Activated CD8-positive, alpha-beta T cell treated with anti-CD3 and anti-CD28 coated beads, Interleukin-2, amount 10 ng/mL, durations not matched to agents 7 days and 5 days (primary cell): ENCODE measurements at regions of chr22 and their contacts with region 1.

Region 1: GRCh38 chr22:19730655-19731360 is 7.5 kb downstream of the GP1BB start:
- DNase-seq: peak; percentile 89
- ATAC-seq: peak; percentile 93
- H3K4me3 Mint-ChIP-seq: peak overlapping the region; percentile 58
- H3K27ac Mint-ChIP-seq: no peak overlapping the region
- H3K4me1 Mint-ChIP-seq: peaks cover 2% of the 10 kb centered on the region
- H3K27me3 Mint-ChIP-seq: no peaks in the 10 kb centered on the region

Region 2: DNA sequence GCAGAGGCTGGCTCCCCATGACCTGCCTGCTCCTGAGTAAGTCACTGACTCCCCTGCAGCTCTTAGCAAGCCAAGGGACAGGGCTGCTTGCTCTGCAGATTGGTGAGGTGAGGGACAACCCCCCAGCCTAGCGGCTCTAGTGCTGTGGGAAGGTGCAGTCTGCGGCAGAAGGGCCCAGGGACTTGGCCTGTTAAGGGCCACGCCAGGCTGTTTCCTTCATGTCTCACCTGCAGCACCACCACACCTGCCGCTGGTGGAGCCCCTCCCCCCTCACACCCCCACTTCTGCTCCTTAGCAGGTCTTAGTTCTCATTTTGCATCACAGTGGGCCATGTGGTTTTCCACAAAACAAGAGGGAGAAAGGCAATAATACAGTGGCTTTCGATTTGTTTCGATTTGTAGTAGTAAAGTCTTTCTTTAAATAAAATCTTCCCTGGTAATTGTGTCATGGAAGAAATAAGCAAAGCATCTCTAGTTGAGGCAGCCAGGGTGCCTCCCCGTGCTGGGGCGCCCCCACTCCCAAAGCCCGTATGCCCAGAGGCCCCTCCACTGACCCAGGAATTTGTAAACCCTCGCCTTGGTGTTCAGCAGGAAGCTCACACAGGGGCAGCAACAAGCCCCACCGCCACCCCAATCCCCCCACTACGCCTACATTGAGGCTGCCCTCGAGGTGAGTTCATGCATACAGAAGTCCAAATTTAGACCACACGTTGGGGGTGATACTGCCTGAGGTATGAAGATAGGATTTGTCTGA is 120.1 kb before region 1 on chr22:
- CTCF ChIA-PET with region 1: no interaction called
- POLR2A ChIA-PET with region 1: no interaction called
- DNase-seq: peak; percentile 40
- ATAC-seq: peak; percentile 55
- H3K4me3 Mint-ChIP-seq: peak overlapping the region; percentile 22
- H3K27ac Mint-ChIP-seq: peak overlapping the region; percentile 63
- H3K4me1 Mint-ChIP-seq: peaks cover 34% of the 10 kb centered on the region
- H3K27me3 Mint-ChIP-seq: no peaks in the 10 kb centered on the region

Region 3: DNA sequence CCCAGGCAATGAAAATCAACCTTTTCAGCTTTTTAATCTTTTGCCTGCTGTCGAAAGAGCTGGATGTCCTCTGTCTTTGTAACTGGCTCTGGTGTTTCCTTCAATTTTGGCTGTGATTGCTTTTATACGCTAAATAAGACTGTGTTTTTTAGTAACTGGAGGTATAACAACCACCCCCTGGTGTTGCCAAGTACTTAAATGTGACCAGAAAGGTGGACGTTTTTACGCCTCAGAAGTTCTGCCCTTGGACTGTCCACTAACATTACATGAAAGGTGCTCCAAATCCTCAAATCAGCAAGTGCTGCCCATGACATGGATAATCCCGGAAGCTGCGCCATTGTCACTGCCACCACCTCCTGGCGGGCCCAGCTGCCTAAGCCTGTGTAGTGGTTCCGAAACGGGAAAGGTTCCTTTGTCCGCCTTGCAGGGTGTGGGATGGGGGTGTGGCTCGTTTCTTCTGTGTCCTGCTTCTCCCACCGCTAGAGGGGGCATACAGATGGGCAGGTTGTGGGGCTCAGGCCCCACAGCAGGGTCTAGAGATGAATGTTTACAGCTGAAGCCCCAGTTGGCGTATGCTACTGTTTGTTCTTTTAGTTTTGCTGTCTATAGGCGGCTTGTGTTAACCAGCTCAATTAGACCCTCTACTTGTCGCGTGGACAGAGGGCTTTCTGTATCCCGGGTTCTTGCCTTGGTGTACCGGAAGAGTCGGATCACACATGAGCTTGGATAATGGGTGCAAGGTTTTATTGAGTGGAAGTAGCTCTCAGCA is 98.7 kb before region 1 on chr22:
- CTCF ChIA-PET with region 1: no interaction called
- POLR2A ChIA-PET with region 1: no interaction called
- DNase-seq: peak; percentile 35
- ATAC-seq: no peak
- H3K4me3 Mint-ChIP-seq: no peak overlapping the region
- H3K27ac Mint-ChIP-seq: no peak overlapping the region
- H3K4me1 Mint-ChIP-seq: no peaks in the 10 kb centered on the region
- H3K27me3 Mint-ChIP-seq: peaks cover 1% of the 10 kb centered on the region

Region 4: DNA sequence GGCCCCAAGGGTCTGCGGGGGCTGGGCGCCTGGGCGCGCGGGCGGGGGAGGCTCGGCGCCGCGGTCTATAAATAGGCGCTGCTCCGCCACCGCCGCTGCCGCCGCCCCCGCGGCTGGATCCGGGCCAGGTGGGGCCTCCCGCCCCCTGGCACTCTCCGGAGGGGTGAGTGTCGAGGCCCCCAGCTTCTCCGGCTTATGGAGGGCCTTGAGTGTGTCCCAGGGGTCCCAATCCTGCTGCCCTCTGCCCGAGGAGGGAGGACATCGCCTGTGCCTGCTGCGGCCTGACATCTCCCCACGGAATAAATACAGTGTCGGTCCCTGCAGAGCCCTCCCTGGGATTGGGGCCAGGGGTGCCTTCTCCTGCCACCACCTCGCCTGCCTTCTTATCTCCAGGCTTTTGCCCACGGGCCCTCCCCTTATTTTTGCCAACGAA is 11.7 kb before region 1 on chr22:
- CTCF ChIA-PET with region 1: interaction called, 10 read pairs
- POLR2A ChIA-PET with region 1: no interaction called
- DNase-seq: no peak
- ATAC-seq: no peak
- H3K4me3 Mint-ChIP-seq: peak overlapping the region; percentile 42
- H3K27ac Mint-ChIP-seq: no peak overlapping the region
- H3K4me1 Mint-ChIP-seq: peaks cover 10% of the 10 kb centered on the region
- H3K27me3 Mint-ChIP-seq: peaks cover 33% of the 10 kb centered on the region

Region 5: GRCh38 chr22:19756288-19757128 is 25.7 kb after region 1 on chr22:
- CTCF ChIA-PET with region 1: interaction called, 11 read pairs
- POLR2A ChIA-PET with region 1: no interaction called
- DNase-seq: peak; percentile 77
- ATAC-seq: peak; percentile 69
- H3K4me3 Mint-ChIP-seq: no peak overlapping the region
- H3K27ac Mint-ChIP-seq: no peak overlapping the region
- H3K4me1 Mint-ChIP-seq: peaks cover 24% of the 10 kb centered on the region
- H3K27me3 Mint-ChIP-seq: peaks cover 62% of the 10 kb centered on the region

Region 6: DNA sequence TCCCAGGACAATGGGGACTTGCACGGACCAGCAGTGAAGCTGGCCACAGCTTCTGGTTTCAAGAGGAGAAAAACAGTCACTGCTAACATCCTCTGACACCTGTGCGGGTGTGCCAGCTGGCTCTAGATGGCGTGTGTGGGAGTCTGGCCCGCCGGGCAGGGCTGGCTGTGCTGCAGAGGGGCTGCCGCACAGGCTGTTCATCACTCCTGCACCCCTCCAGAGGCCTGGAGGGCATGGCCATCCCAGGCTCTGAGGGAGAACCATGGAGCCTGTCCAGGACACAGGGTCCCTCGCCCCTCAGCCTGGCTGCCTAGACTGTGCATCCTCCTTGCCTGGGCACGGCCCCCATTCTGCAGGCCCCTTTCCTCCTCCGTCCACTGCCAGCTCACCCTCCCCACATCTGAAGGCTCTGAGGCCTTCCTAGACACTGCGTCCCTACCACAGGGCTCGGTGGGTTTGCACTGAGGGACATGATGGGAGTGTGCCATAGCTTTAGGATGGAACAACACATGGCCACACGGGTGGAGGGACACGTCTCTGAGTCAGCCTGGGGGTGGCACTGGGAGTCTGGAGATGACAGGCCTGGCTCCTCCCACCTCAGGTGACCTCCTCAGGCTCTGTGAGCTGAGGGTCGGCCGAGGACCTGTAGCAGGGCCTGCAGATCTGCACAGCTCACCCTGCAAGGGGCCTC is 166.0 kb after region 1 on chr22:
- CTCF ChIA-PET with region 1: interaction called, 22 read pairs
- POLR2A ChIA-PET with region 1: no interaction called
- DNase-seq: peak; percentile 33
- ATAC-seq: no peak
- H3K4me3 Mint-ChIP-seq: no peak overlapping the region
- H3K27ac Mint-ChIP-seq: peak overlapping the region; percentile 20
- H3K4me1 Mint-ChIP-seq: peaks cover 30% of the 10 kb centered on the region
- H3K27me3 Mint-ChIP-seq: no peaks in the 10 kb centered on the region

Region 7: GRCh38 chr22:19955241-19956128 is 224.7 kb after region 1 on chr22:
- CTCF ChIA-PET with region 1: interaction called, 15 read pairs
- POLR2A ChIA-PET with region 1: no interaction called
- DNase-seq: peak; percentile 63
- ATAC-seq: peak; percentile 74
- H3K4me3 Mint-ChIP-seq: peak overlapping the region; percentile 63
- H3K27ac Mint-ChIP-seq: peak overlapping the region; percentile 98
- H3K4me1 Mint-ChIP-seq: peaks cover 35% of the 10 kb centered on the region
- H3K27me3 Mint-ChIP-seq: no peaks in the 10 kb centered on the region